Activated CD4-positive, alpha-beta T cell treated with anti-CD3 and anti-CD28 coated beads for 36 hours (primary cell): ENCODE measurements at regions of chr6 and their contacts with region 1.

Region 1: DNA sequence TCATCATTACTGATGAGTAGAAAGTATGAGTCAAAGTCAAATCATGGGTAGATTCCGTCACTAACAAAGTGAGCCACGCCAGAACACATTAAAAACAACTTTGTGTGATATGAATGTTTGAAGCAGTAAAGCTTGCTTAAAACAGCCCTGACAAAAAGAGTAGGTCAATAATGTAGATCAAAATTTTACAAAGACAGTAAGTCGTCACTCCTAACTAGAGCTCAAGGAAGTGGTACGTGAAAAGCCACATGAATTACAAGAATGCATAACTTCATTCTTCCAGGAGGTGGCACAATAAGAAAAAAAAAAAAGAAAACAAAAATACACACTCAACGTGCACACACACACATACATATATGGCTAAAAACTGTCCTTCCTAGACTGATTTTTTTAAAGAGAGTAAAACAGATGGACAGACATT is 69.9 kb downstream of the HACE1 start:
- DNase-seq: peak; percentile 33
- ATAC-seq: peak; percentile 95
- H3K4me3 Mint-ChIP-seq: peak overlapping the region; percentile 50
- H3K27ac Mint-ChIP-seq: peak overlapping the region; percentile 95
- H3K4me1 Mint-ChIP-seq: peaks cover 33% of the 10 kb centered on the region
- H3K27me3 Mint-ChIP-seq: no peaks in the 10 kb centered on the region

Region 2: DNA sequence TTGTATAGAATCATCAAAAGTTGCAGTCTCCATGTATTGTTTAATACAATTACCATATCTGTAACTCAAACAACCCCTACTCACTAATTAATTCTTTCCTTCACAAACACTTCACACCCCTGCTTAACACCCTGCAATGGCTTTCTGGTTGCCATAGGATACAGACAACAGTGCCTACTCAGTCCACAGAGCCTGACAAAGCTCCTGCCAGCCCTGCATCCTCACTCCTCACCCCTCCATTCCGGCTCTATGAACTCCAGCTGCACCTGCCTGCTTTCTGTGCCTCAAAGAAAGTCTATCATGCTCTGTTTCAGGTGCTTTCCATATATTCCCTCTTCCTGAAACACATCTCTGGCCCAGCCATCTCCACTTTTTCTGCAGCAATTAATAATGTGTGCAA is 183.4 kb before region 1 on chr6:
- CTCF ChIA-PET with region 1: interaction called, 3 read pairs
- POLR2A ChIA-PET with region 1: no interaction called
- intact Hi-C with region 1: loop called in 1 of 2 experiments (anchors 5 kb)
- DNase-seq: no peak
- ATAC-seq: no peak
- H3K4me3 Mint-ChIP-seq: no peak overlapping the region
- H3K27ac Mint-ChIP-seq: no peak overlapping the region
- H3K4me1 Mint-ChIP-seq: peaks cover 27% of the 10 kb centered on the region
- H3K27me3 Mint-ChIP-seq: peaks cover 2% of the 10 kb centered on the region

Region 3: GRCh38 chr6:104771258-104771832 is 18.4 kb before region 1 on chr6:
- CTCF ChIA-PET with region 1: interaction called, 10 read pairs
- POLR2A ChIA-PET with region 1: no interaction called
- intact Hi-C with region 1: no loop called
- DNase-seq: no peak
- ATAC-seq: peak; percentile 80
- H3K4me3 Mint-ChIP-seq: no peak overlapping the region
- H3K27ac Mint-ChIP-seq: no peak overlapping the region
- H3K4me1 Mint-ChIP-seq: peaks cover 7% of the 10 kb centered on the region
- H3K27me3 Mint-ChIP-seq: no peaks in the 10 kb centered on the region

Region 4: DNA sequence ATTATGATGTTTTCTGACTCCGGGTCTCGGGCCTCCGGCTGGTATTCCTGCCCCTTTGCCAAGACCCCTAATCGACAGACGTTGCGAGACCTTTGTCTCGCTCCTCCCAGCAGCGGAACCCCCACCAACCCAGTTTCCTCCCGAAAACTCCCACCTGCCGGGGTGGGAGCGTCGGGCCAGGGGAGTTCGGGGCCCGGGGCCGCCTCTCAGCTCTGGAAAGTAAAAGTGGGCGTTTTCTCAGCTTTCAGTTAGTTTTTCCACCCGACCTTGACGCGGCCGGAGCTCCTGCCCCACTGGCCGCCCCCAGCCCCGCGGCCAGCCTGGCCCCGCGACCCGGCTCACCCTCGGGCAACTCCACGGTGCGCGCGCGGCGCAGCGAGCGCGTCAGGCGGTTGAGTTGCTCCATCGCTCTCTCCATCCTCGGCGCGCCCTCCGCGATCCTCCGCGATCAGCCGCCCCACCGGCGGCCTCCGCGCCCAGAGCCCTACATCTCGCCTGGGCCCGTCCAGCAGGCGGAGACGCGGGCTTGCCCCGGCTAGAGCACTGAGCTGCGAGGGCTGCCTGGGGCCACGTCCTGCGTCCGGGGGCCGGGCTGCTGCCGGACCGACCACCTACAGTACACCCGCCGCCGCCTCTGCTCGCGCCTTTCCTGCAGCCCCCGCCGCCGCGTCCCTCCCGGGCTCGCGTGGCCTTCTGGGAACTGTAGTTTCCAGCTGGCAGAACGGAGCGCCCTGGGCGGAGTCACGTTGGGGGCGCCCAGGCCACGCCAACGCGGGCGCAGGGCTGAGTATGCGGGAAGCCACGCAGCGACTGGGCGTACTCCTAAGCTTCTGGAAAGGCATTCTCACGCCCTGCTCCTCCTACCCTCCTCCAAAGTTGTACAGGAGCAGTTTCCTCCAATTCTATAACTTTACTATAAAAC is 69.7 kb after region 1 on chr6 and contains the start of gene HACE1:
- CTCF ChIA-PET with region 1: interaction called, 13 read pairs
- POLR2A ChIA-PET with region 1: no interaction called
- intact Hi-C with region 1: loop called (anchors 1 to 2 kb)
- DNase-seq: peak; percentile 94
- ATAC-seq: peak; percentile 99
- H3K4me3 Mint-ChIP-seq: peak within 1 kb of the TSS; percentile 90
- H3K27ac Mint-ChIP-seq: peak within 1 kb of the TSS; percentile 90
- H3K4me1 Mint-ChIP-seq: peaks cover 19% of the 10 kb centered on the region
- H3K27me3 Mint-ChIP-seq: peaks cover 3% of the 10 kb centered on the region
- total RNA-seq, gene HACE1: 12.1 to 15.7 TPM

Region 5: GRCh38 chr6:104887358-104887757 is 97.6 kb after region 1 on chr6:
- CTCF ChIA-PET with region 1: no interaction called
- POLR2A ChIA-PET with region 1: no interaction called
- intact Hi-C with region 1: no loop called
- DNase-seq: peak; percentile 6
- ATAC-seq: no peak
- H3K4me3 Mint-ChIP-seq: no peak overlapping the region
- H3K27ac Mint-ChIP-seq: no peak overlapping the region
- H3K4me1 Mint-ChIP-seq: peaks cover 5% of the 10 kb centered on the region
- H3K27me3 Mint-ChIP-seq: peaks cover 12% of the 10 kb centered on the region

Region 6: GRCh38 chr6:105077596-105078385 is 288.0 kb after region 1 on chr6:
- CTCF ChIA-PET with region 1: no interaction called
- POLR2A ChIA-PET with region 1: no interaction called
- intact Hi-C with region 1: loop called (anchors 2 to 5 kb)
- DNase-seq: no peak
- ATAC-seq: no peak
- H3K4me3 Mint-ChIP-seq: no peak overlapping the region
- H3K27ac Mint-ChIP-seq: no peak overlapping the region
- H3K4me1 Mint-ChIP-seq: no peaks in the 10 kb centered on the region
- H3K27me3 Mint-ChIP-seq: peaks cover 13% of the 10 kb centered on the region